Mucosa of descending colon (tissue), 3 donors: ENCODE measurements at regions of chr6 and their contacts with region 1.

Region 1: DNA sequence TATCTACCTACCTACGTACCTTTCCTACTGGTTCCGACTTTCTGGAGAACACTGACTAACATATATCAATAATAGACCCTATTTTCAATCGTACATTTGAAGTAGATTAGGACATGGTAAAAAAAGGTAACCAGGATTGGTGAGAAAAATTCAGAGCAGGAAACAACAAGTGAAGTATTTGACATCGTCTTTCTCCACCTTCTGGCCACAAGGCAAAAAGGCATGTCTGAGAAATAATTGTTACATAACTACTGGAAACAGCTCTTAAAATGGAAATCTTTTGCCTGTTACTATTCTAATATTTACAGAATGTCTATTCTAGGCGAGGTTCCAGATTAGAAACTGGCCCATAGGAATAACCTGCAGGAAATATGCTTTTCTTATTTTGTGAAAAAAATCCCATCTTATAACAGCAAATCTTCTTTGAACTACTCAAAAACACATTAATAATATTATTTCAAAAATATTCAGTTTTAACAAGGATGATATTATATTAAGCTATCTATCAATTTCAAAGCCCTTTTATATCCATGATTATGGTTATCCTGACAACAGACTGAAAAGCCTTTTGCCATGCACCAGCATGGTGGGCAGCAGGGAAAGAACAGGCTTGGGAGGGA is 80.8 kb downstream of the RCAN2 start:
- DNase-seq: peak in 1 of 3 donors; percentile 35
- ATAC-seq: peak; percentile 62
- H3K4me3 ChIP-seq: no peak overlapping the region
- H3K4me1 ChIP-seq: peaks cover 4% of the 10 kb centered on the region
- CTCF ChIP-seq: peak; percentile 47

Region 2: DNA sequence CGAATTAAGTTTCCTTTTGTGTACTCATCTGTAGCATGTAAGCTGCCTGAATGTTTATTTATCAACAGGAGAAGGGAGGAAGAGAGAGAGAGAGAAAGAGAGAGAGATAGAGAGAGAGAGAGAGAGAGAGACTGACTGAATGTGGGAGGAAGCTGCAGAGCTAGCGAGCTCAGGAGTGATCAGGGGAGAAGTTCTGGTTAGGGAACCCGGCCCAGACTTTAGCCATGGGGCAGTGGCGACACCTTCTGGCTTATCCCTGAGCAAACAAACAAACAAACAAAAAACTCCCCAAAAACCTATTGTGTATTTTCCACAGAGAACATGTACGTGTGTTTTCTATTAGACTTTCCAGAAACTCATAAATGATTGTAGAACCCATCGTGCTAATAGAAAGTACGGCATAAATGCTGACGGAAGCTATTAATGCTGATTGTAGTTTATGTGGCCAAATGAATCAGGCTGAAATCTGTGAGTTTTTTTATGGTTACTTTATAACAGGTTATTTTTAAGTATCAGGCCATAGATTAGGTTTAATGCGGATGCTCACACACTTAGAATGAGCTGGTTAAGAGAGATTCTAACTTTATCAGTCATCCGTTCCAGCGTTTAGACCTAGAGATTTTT is 487.6 kb before region 1 on chr6:
- intact Hi-C with region 1: loop called in 1 of 2 experiments (anchors 10 kb)
- DNase-seq: peak; percentile 51 to 66 (median 60)
- ATAC-seq: peak; percentile 72
- H3K4me3 ChIP-seq: no peak overlapping the region
- H3K4me1 ChIP-seq: no peaks in the 10 kb centered on the region
- CTCF ChIP-seq: no peak

Region 3: GRCh38 chr6:46090115-46091079 is 320.0 kb before region 1 on chr6:
- intact Hi-C with region 1: loop called (anchors 2 to 10 kb)
- DNase-seq: peak; percentile 50 to 77 (median 55)
- ATAC-seq: peak; percentile 83
- H3K4me3 ChIP-seq: no peak overlapping the region
- H3K4me1 ChIP-seq: no peaks in the 10 kb centered on the region
- CTCF ChIP-seq: peak; percentile 53

Region 4: GRCh38 chr6:46221222-46221793 is 189.1 kb before region 1 on chr6:
- intact Hi-C with region 1: loop called (anchors 2 to 5 kb)
- DNase-seq: peak in 1 of 3 donors; percentile 38
- ATAC-seq: peak; percentile 84
- H3K4me3 ChIP-seq: no peak overlapping the region
- H3K4me1 ChIP-seq: no peaks in the 10 kb centered on the region
- CTCF ChIP-seq: peak; percentile 50

Region 5: DNA sequence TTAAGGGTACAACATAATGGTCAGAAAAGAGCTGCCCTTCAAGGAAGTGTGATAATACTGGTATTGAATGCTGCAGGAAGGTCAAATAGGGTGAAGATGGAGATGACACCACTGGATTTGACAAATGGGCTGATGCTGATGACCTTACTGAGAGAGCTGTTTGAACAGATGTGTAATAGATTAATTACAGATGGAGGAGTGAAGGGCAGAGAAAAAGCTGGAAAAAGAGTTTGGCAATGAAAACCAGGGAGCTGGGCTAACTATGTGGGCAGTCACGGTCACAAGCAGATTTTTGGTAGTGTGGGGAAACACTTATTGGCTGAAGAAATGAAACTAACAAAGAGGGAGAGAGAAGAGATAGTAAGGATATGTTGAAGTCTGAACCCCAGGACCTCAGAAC is 156.1 kb before region 1 on chr6:
- intact Hi-C with region 1: no loop called
- DNase-seq: no peak
- ATAC-seq: no peak
- H3K4me3 ChIP-seq: no peak overlapping the region
- H3K4me1 ChIP-seq: peaks cover 9% of the 10 kb centered on the region
- CTCF ChIP-seq: no peak